ENCODE measurements at regions of chr17 and their contacts with region 1.

Region 1: DNA sequence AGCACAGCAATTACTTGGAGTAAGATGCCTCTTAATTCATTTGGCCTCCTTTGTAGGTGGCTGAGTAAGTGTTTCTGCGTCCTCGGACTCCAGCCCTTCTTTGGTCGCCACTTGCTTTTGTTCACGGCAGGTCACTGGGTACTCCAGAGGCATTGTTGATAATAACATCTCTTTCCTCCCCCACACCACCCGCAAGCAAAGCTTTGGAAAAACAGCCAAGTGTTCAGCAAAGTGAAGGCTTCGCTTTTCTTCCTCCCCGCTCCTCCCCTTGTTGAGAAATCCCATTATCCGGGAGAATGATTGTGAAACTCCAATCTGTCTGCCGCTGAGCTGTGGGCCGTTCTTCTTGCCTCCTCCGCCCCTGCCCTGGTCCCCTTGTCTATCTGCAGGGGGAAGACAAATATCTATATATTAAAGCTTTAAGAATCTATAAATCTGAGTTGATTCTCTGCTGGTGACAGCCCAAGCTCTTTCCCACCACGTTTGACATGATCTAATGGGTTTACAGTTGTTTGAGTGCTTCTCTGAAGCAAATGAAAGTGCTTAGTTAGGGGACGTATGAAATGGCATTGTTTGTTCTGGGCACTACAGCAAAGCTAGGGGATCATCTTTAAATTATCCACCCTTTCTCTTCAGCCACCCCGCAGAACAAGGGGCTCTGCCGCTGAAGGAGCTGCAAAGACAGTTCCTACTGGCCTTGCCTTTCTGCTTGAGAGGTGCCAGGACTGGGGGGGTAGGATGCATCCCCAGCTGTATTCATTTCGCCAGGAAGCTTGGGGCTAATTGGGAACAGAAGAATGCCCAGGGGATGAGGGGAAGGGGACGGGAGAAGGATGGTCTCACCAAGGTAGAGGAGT is 167.1 kb downstream of the CCDC182 start:
- DNase-seq: peak; percentile 79
- ATAC-seq: peak; percentile 79

Region 2: DNA sequence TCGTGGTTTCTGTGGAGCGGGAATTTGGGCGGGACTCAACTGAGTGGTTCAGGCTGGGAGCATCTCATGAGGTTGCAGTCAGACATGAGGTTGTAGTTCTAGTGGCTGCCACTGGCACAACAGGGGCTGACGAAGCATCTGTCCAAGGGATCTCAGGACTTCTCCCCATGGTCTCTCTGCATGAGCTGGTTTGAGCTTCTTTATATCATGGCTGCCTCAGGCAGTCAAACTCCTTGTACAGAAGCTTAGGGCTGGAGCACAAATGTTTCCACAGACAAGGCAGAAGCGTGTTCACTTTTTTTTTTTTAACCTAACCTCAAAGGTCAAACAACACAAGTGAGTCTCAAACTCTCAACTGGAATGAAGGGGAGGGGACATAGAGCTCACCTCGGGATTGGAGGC is 78.3 kb before region 1 on chr17:
- intact Hi-C with region 1: loop called (anchors 10 kb)
- DNase-seq: no peak
- ATAC-seq: no peak

Measured in Right ventricle myocardium inferior (tissue), 1 donor.